Motor neuron (in vitro differentiated cells): ENCODE measurements at regions of chr20 and their contacts with region 1.

Region 1: DNA sequence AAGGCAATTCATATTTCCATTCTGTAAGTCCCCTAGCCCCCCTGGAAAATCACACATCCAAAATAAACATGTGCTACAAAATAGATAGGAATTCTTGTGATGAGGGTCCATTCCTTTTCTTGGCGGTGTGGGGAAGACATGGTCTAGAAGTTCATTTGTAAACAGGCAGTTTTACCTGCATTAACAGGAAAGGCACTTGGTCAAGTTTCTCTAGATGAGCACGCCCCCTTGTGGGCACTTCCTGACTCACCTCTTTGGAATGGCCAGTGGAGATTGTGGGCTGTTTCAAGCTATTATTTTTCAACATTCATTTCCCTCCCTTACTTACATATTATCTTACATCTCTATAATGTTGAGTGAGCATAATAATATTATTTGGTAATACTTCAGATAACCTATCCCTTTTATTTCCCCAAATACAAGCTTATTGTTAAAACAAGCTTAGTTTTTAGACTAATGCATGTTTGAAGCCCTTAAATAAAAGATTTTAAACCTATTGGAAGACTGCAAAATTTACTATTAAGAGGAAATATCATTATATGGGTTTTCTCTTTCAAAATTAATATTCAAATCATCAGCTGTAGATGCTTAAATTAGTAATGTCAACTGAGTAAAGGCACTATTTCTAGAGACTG is 92.1 kb downstream of the TASP1 start:
- ATAC-seq: peak in 6 of 8 experiments; percentile 36 to 73 (median 64)
- H3K4me3 ChIP-seq: no peak overlapping the region
- H3K27ac ChIP-seq: no peak overlapping the region
- H3K4me1 ChIP-seq: no peaks in the 10 kb centered on the region

Region 2: DNA sequence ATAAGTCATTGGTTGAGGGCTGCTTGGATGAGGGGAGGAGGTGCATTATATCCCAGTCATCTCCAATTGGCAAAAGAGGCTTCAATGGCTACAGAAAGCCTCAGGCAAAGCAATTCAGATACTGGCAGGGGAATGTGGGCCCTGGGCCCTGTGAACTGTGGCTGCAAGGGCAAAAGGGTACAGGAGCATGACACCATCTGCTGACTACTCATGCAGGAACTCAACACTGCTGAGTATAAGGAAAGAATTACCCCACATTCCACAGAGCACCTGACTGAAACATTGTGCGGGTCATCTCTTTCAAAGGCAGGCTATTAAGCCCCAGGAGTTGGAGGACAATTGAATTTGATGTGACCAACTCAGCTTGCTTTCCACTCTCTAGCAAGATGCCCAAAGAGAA is 629.9 kb before region 1 on chr20:
- in situ Hi-C with region 1: loop called in 1 of 9 experiments (anchors 25 kb)
- ATAC-seq: no peak
- H3K4me3 ChIP-seq: no peak overlapping the region
- H3K27ac ChIP-seq: no peak overlapping the region
- H3K4me1 ChIP-seq: peaks cover 0 to 8% of the 10 kb centered on the region in 2 donors

Region 3: DNA sequence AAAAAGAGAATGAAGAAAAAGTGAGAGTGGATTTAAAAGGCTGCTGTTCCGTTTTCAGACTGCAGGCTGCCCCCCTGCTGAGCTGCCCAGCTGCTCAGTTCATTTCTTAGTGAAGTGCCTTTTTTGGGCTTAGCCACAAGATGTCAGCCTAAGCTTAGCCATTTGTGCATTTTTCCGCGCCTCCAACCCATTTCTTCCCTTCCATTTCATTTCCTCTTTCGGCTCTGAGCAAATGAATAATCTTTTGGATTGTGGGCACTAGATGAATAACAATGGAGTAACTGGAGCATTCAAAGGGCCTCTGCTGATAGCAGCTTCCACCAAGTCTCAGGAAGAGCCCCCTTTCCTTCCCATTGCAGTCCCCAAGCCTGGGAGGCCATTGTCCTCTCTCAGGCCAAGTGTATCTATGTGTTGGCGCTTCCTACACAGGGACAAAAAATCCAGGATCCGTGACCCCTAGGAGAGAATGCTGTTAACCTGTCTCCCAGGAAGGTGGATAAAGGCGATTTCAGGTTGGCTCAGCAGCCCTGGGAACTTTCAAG is 621.3 kb before region 1 on chr20:
- in situ Hi-C with region 1: loop called in 2 of 9 experiments (anchors 25 kb)
- ATAC-seq: peak; percentile 92 to 98 (median 95)
- H3K4me3 ChIP-seq: no peak overlapping the region
- H3K27ac ChIP-seq: no peak overlapping the region
- H3K4me1 ChIP-seq: peaks cover 9 to 14% of the 10 kb centered on the region in 2 donors

Region 4: GRCh38 chr20:13119583-13119982 is 427.0 kb before region 1 on chr20:
- in situ Hi-C with region 1: loop called in 1 of 9 experiments (anchors 25 kb)
- ATAC-seq: peak; percentile 61 to 97 (median 79)
- H3K4me3 ChIP-seq: no peak overlapping the region
- H3K27ac ChIP-seq: no peak overlapping the region
- H3K4me1 ChIP-seq: peaks cover 0 to 2% of the 10 kb centered on the region in 2 donors

Region 5: DNA sequence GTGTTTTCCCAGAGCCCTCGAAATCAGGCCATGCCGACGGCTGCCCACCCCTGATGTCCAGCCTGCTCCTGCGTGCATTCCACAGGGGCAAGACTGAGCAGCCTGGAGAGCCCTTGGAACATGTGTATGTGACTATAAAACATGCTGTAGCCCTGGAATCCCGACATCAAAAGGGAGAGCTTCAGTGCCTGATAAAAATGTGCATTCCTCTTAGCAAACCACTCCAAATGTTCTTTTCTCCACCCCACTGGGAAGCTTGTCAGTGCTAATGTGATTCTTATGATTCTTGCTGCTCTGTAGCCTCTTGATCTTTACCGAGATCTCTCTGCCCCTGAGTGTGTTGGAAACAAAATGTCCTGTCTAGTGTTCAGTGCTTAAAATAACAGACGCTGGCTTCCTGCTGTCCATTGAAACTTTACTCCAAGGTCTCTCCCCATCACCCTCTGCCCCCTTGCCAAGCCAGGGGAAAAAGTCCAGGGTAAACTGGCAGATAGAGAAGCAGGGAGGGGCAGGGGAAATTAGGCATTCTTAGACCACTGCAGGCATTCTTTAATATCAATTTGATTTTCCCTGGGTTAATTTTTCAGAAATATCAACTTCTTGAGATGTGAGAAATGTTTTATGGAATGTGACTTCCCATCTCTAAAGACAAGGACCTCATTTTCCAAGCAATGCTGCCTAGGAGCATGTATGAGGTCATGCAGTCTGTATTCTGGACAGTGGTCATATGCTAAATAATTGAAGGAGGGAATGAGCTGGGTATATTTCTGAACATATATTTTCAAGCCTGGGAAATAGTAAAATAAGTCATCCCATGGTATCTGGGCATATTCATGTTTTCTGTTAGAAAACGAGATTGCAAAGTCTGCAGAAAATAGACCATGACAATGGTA is 399.3 kb before region 1 on chr20:
- in situ Hi-C with region 1: loop called in 2 of 9 experiments (anchors 25 kb)
- ATAC-seq: peak in 3 of 8 experiments; percentile 75 to 93 (median 90)
- H3K4me3 ChIP-seq: no peak overlapping the region
- H3K27ac ChIP-seq: no peak overlapping the region
- H3K4me1 ChIP-seq: no peaks in the 10 kb centered on the region

Region 6: GRCh38 chr20:13302647-13303450 is 243.8 kb before region 1 on chr20:
- in situ Hi-C with region 1: loop called in 3 of 9 experiments (anchors 25 kb)
- ATAC-seq: peak in 4 of 8 experiments; percentile 76 to 90 (median 82)
- H3K4me3 ChIP-seq: no peak overlapping the region
- H3K27ac ChIP-seq: no peak overlapping the region
- H3K4me1 ChIP-seq: no peaks in the 10 kb centered on the region